PC-9 (cell line): ENCODE measurements at regions of chr1 and their contacts with region 1.

Region 1: DNA sequence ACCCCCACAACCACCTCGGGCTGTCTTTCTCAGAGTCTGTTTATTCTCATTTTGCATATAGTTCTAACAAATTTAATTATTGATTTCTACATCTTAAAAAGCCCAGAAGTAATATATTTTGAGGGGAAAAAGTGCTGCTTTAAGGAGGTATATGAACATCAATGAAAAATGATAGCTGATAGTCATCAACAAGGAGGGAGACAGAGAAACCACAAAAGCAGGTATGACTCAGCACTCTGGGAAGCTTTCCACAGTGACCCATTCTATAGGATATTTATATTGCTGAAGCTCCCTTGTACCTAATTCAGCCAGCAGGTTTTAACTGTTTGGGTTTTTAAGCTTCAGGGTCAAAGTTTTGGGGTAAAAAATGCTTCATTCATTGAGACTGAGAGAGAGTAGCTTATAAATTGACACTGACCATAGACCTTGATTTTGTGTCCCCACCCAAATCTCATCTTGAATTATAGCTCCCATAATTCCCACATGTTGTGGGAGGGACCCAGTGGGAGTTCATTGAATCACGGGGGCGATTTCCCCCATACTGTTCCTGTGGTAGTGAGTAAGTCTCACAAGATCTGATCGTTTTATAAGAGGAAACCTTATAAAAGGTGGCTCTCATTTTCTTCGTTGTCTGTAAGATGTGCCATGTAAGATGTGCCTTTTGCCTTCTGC is 27.4 kb downstream of the VANGL1 start:
- DNase-seq: peak; percentile 44 to 83
- H3K4me3 ChIP-seq: peak overlapping the region; percentile 2; the same call in 1 of the 2 replicates
- H3K27ac ChIP-seq: peak overlapping the region; percentile 89
- H3K4me1 ChIP-seq: peaks cover 73% of the 10 kb centered on the region
- H3K27me3 ChIP-seq: no peaks in the 10 kb centered on the region
- CTCF ChIP-seq: no peak

Region 2: GRCh38 chr1:115577513-115577912 is 91.6 kb before region 1 on chr1:
- CTCF ChIA-PET with region 1: no interaction called
- POLR2A ChIA-PET with region 1: no interaction called
- intact Hi-C with region 1: no loop called
- DNase-seq: no peak
- H3K4me3 ChIP-seq: no peak overlapping the region
- H3K27ac ChIP-seq: no peak overlapping the region
- H3K4me1 ChIP-seq: no peaks in the 10 kb centered on the region
- H3K27me3 ChIP-seq: no peaks in the 10 kb centered on the region
- CTCF ChIP-seq: no peak

Region 3: GRCh38 chr1:115642168-115643072 is 26.7 kb before region 1 on chr1:
- CTCF ChIA-PET with region 1: no interaction called
- POLR2A ChIA-PET with region 1: interaction called, 4 read pairs
- intact Hi-C with region 1: loop called (anchors 2 kb)
- DNase-seq: peak; percentile 64 to 76
- H3K4me3 ChIP-seq: peak overlapping the region; percentile 62
- H3K27ac ChIP-seq: peak overlapping the region; percentile 38
- H3K4me1 ChIP-seq: peaks cover 36% of the 10 kb centered on the region
- H3K27me3 ChIP-seq: no peaks in the 10 kb centered on the region
- CTCF ChIP-seq: peak; percentile 44; the same call in 1 of the 2 replicates

Region 4: DNA sequence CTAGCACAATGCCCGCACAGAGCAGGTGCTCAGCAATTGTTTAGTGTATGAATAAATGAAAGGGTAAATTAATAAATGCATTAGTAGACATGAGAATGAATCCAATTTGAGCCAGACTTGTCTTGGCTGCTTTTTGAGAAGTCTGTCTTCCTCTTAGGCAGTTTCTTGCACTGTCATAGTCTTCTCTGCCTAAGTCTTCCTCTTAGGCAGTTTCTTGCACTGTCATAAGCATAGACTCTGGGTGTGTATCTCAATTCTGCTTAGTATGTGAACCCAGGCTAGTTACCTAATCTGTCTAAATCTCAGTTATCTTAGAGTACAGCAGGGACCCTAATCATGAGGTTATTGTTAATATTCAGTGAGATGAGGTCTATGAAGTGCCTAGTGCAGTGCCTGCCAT is 144.6 kb after region 1 on chr1:
- CTCF ChIA-PET with region 1: no interaction called
- POLR2A ChIA-PET with region 1: no interaction called
- intact Hi-C with region 1: no loop called
- DNase-seq: no peak
- H3K4me3 ChIP-seq: no peak overlapping the region
- H3K27ac ChIP-seq: no peak overlapping the region
- H3K4me1 ChIP-seq: no peaks in the 10 kb centered on the region
- H3K27me3 ChIP-seq: no peaks in the 10 kb centered on the region
- CTCF ChIP-seq: no peak

Region 5: GRCh38 chr1:116133696-116134650 is 464.8 kb after region 1 on chr1:
- CTCF ChIA-PET with region 1: no interaction called
- POLR2A ChIA-PET with region 1: interaction called, 11 read pairs
- intact Hi-C with region 1: no loop called
- DNase-seq: no peak
- H3K4me3 ChIP-seq: no peak overlapping the region
- H3K27ac ChIP-seq: no peak overlapping the region
- H3K4me1 ChIP-seq: peaks cover 6% of the 10 kb centered on the region
- H3K27me3 ChIP-seq: no peaks in the 10 kb centered on the region
- CTCF ChIP-seq: peak; percentile 45; the same call in 1 of the 2 replicates

Region 6: GRCh38 chr1:116853670-116854402 is 1184.7 kb after region 1 on chr1:
- CTCF ChIA-PET with region 1: no interaction called
- POLR2A ChIA-PET with region 1: no interaction called
- intact Hi-C with region 1: no loop called
- DNase-seq: peak; percentile 71 to 100
- H3K4me3 ChIP-seq: peak overlapping the region; percentile 34; the same call in 1 of the 2 replicates
- H3K27ac ChIP-seq: peak overlapping the region; percentile 77
- H3K4me1 ChIP-seq: peaks cover 47% of the 10 kb centered on the region
- H3K27me3 ChIP-seq: no peaks in the 10 kb centered on the region
- CTCF ChIP-seq: no peak